ENCODE measurements at regions of chr3 and their contacts with region 1.

Region 1: DNA sequence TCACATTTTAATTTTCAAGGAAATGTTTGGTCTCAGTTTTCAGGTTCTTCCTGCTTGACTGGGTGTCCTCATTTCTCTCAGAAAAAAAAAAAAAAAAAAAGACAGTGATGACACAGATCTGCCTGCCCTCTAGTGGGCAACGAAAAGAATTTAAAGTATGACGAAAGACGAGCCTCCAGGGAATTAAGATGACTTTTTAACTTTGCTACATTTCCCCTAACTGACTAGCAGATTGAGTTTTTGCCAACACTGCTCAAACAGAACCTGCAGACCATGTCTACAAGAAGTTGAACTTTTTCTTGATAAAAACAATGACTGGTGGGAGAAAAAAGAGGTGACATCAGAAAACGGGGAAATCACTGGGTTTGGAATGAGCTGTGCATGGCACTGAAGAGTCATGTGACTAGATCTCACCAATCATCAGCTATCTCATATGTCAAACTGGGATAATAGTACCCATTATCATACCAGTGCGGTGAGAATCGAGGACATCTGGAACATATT is 40.8 kb downstream of the EOMES start:
- DNase-seq: peak; percentile 79
- H3K4me3 ChIP-seq: peak overlapping the region in 1 of 3 experiments; percentile 12
- H3K27ac ChIP-seq: peak overlapping the region; percentile 20
- H3K4me1 ChIP-seq: peaks cover 3% of the 10 kb centered on the region
- H3K27me3 ChIP-seq: no peaks in the 10 kb centered on the region
- CTCF ChIP-seq: peak; percentile 50 to 55
- POLR2A ChIP-seq: no peak

Region 2: GRCh38 chr3:27253831-27254230 is 427.5 kb before region 1 on chr3:
- CTCF ChIA-PET with region 1: interaction called, 18 read pairs
- POLR2A ChIA-PET with region 1: no interaction called
- dilution Hi-C with region 1: no loop called
- intact Hi-C with region 1: no loop called
- DNase-seq: peak; percentile 46
- H3K4me3 ChIP-seq: no peak overlapping the region
- H3K27ac ChIP-seq: no peak overlapping the region
- H3K4me1 ChIP-seq: no peaks in the 10 kb centered on the region
- H3K27me3 ChIP-seq: no peaks in the 10 kb centered on the region
- CTCF ChIP-seq: peak; percentile 36 to 58
- POLR2A ChIP-seq: no peak

Region 3: GRCh38 chr3:27431116-27431515 is 250.2 kb before region 1 on chr3:
- CTCF ChIA-PET with region 1: interaction called, 25 read pairs
- POLR2A ChIA-PET with region 1: no interaction called
- dilution Hi-C with region 1: no loop called
- intact Hi-C with region 1: loop called (anchors 2 kb)
- DNase-seq: peak; percentile 96
- H3K4me3 ChIP-seq: no peak overlapping the region
- H3K27ac ChIP-seq: peak overlapping the region; percentile 52
- H3K4me1 ChIP-seq: peaks cover 12% of the 10 kb centered on the region
- H3K27me3 ChIP-seq: no peaks in the 10 kb centered on the region
- CTCF ChIP-seq: no peak
- POLR2A ChIP-seq: no peak

Region 4: GRCh38 chr3:27521179-27521871 is 160.0 kb before region 1 on chr3:
- CTCF ChIA-PET with region 1: interaction called, 10 read pairs
- POLR2A ChIA-PET with region 1: no interaction called
- dilution Hi-C with region 1: no loop called
- intact Hi-C with region 1: no loop called
- DNase-seq: peak; percentile 49
- H3K4me3 ChIP-seq: no peak overlapping the region
- H3K27ac ChIP-seq: no peak overlapping the region
- H3K4me1 ChIP-seq: peaks cover 8% of the 10 kb centered on the region
- H3K27me3 ChIP-seq: no peaks in the 10 kb centered on the region
- CTCF ChIP-seq: no peak
- POLR2A ChIP-seq: no peak

Region 5: GRCh38 chr3:27568393-27568792 is 112.9 kb before region 1 on chr3:
- CTCF ChIA-PET with region 1: interaction called, 14 read pairs
- POLR2A ChIA-PET with region 1: no interaction called
- dilution Hi-C with region 1: no loop called
- intact Hi-C with region 1: no loop called
- DNase-seq: no peak
- H3K4me3 ChIP-seq: no peak overlapping the region
- H3K27ac ChIP-seq: no peak overlapping the region
- H3K4me1 ChIP-seq: peaks cover 5% of the 10 kb centered on the region
- H3K27me3 ChIP-seq: no peaks in the 10 kb centered on the region
- CTCF ChIP-seq: no peak
- POLR2A ChIP-seq: no peak

Region 6: DNA sequence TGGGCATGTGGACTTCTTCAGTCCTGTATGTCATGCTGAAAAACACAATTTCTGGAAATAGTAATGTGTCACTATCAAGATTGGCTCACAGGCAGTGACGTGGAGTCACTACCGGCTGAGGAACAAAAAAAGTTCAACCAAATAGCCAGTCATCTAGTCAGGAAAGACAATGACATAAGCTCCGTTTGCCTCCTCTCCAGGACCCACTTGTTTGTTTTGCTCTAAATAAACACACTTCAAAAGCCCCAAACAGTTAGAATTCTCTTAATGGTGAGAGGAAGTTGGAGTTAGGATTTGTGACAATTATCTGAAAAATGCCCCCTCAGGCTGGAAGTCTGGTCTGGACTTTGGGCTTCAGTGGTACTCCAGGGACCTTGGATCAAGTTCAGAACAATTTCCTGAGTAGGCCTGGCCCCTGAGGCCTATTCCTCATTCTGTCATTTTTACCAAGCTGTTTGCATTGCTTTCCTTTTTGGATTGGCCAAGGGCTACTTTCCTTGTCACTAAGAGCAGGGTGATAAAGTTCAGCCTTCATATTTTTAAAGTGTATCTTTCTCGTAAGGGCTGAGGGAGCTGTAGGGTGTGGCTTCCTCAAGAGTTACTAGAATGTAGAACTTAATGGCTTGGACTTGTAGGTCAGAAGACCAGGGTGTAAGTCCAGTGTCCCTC is 58.1 kb before region 1 on chr3:
- CTCF ChIA-PET with region 1: interaction called, 15 read pairs
- POLR2A ChIA-PET with region 1: no interaction called
- dilution Hi-C with region 1: no loop called
- intact Hi-C with region 1: loop called (anchors 2 kb)
- DNase-seq: peak; percentile 74
- H3K4me3 ChIP-seq: no peak overlapping the region
- H3K27ac ChIP-seq: peak overlapping the region; percentile 94
- H3K4me1 ChIP-seq: peaks cover 40% of the 10 kb centered on the region
- H3K27me3 ChIP-seq: no peaks in the 10 kb centered on the region
- CTCF ChIP-seq: no peak
- POLR2A ChIP-seq: no peak

Region 7: DNA sequence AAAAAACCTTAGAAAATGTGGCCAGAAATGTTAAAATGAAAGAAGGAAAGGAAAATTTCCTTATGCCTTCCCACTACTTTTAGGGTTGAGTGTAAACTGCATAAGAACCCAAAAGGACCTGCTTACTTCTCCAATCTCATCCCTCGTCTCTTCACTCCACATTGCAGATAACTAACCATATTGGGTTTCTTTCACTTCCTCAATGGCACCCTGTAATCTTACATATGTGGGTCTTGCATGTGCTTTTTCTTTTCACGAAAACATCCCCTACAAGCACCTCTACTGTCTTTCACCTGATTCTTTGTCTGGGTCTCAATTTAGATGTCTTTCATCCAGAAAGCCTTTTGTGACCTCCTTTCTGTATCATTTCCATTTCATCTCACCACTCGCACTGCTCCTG is 17.8 kb after region 1 on chr3:
- CTCF ChIA-PET with region 1: interaction called, 23 read pairs
- POLR2A ChIA-PET with region 1: no interaction called
- dilution Hi-C with region 1: no loop called
- intact Hi-C with region 1: no loop called
- DNase-seq: no peak
- H3K4me3 ChIP-seq: no peak overlapping the region
- H3K27ac ChIP-seq: no peak overlapping the region
- H3K4me1 ChIP-seq: peaks cover 3% of the 10 kb centered on the region
- H3K27me3 ChIP-seq: no peaks in the 10 kb centered on the region
- CTCF ChIP-seq: no peak
- POLR2A ChIP-seq: no peak

Region 8: GRCh38 chr3:27737091-27737490 is 55.8 kb after region 1 on chr3:
- CTCF ChIA-PET with region 1: no interaction called
- POLR2A ChIA-PET with region 1: no interaction called
- dilution Hi-C with region 1: no loop called
- intact Hi-C with region 1: no loop called
- DNase-seq: no peak
- H3K4me3 ChIP-seq: no peak overlapping the region
- H3K27ac ChIP-seq: no peak overlapping the region
- H3K4me1 ChIP-seq: no peaks in the 10 kb centered on the region
- H3K27me3 ChIP-seq: peaks cover 4 to 22% of the 10 kb centered on the region in 2 experiments
- CTCF ChIP-seq: no peak
- POLR2A ChIP-seq: no peak

Region 9: DNA sequence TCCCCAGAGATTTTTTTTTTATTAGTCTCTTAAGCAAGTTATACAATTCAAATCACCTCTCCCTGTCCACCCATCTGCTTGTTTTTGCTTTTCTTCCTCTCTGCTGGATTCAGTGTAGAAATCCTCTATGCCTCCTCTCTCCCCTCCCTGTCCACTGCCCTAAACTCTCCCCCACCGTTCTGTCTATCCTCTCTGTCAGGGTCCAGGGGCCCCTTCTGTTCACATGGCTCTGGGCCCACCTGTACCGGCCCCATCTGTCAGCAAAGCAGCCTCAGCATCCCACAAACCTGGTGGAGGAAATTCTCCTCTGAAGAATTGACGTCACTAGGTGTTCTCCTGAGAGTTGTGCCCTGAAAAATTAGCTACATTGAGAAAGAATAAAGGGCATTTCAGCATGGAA is 422.6 kb after region 1 on chr3:
- CTCF ChIA-PET with region 1: no interaction called
- POLR2A ChIA-PET with region 1: no interaction called
- dilution Hi-C with region 1: no loop called
- intact Hi-C with region 1: no loop called
- DNase-seq: no peak
- H3K4me3 ChIP-seq: no peak overlapping the region
- H3K27ac ChIP-seq: no peak overlapping the region
- H3K4me1 ChIP-seq: no peaks in the 10 kb centered on the region
- H3K27me3 ChIP-seq: no peaks in the 10 kb centered on the region
- CTCF ChIP-seq: no peak
- POLR2A ChIP-seq: no peak

Region 10: GRCh38 chr3:28206479-28206878 is 525.2 kb after region 1 on chr3:
- CTCF ChIA-PET with region 1: no interaction called
- POLR2A ChIA-PET with region 1: no interaction called
- dilution Hi-C with region 1: no loop called
- intact Hi-C with region 1: no loop called
- DNase-seq: no peak
- H3K4me3 ChIP-seq: no peak overlapping the region
- H3K27ac ChIP-seq: no peak overlapping the region
- H3K4me1 ChIP-seq: no peaks in the 10 kb centered on the region
- H3K27me3 ChIP-seq: no peaks in the 10 kb centered on the region
- CTCF ChIP-seq: no peak
- POLR2A ChIP-seq: no peak